ENCODE measurements at regions of chr21 and their contacts with region 1.

Region 1: GRCh38 chr21:23223882-23224281 is 2225.7 kb downstream of the NCAM2 start:
- DNase-seq: no peak
- H3K4me3 ChIP-seq: no peak overlapping the region
- H3K27ac ChIP-seq: no peak overlapping the region
- H3K4me1 ChIP-seq: no peaks in the 10 kb centered on the region
- H3K27me3 ChIP-seq: no peaks in the 10 kb centered on the region
- CTCF ChIP-seq: no peak

Region 2: DNA sequence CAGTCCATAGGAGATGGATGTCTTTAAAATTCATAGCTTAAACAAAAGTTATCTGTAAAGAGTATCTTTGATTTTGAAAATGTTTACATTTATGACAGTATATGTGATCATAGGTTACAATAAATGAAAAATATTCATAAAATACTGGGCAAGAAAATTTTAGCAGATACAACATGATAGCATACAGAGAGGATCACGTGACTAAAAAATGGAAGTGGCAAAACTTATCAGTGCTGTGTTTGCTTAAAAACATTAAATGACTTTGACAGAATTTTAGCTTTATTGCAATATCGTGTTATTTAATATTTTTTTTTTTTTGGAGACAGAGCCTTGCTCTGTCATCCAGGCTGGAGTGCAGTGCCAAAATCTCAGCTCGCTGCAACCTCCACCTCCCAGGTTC is 68.4 kb after region 1 on chr21:
- CTCF ChIA-PET with region 1: no interaction called
- dilution Hi-C with region 1: no loop called
- in situ Hi-C with region 1: no loop called
- intact Hi-C with region 1: loop called (anchors 5 kb)
- DNase-seq: no peak
- H3K4me3 ChIP-seq: no peak overlapping the region
- H3K27ac ChIP-seq: no peak overlapping the region
- H3K4me1 ChIP-seq: no peaks in the 10 kb centered on the region
- H3K27me3 ChIP-seq: no peaks in the 10 kb centered on the region
- CTCF ChIP-seq: no peak